T-cell (primary cell): ENCODE measurements at regions of chr2 and their contacts with region 1.

Region 1: GRCh38 chr2:135839713-135840112 is 2.7 kb upstream of the LCT start:
- DNase-seq: no peak
- ATAC-seq: no peak
- H3K4me3 ChIP-seq: no peak overlapping the region
- H3K4me3 Mint-ChIP-seq: no peak overlapping the region
- H3K27ac ChIP-seq: no peak overlapping the region
- H3K27ac Mint-ChIP-seq: no peak overlapping the region
- H3K4me1 ChIP-seq: peaks cover 2 to 3% of the 10 kb centered on the region in 2 experiments
- H3K4me1 Mint-ChIP-seq: peaks cover 13 to 25% (median 16%) of the 10 kb centered on the region in 3 donors
- H3K27me3 ChIP-seq: no peaks in the 10 kb centered on the region
- H3K27me3 Mint-ChIP-seq: no peaks in the 10 kb centered on the region

Region 2: DNA sequence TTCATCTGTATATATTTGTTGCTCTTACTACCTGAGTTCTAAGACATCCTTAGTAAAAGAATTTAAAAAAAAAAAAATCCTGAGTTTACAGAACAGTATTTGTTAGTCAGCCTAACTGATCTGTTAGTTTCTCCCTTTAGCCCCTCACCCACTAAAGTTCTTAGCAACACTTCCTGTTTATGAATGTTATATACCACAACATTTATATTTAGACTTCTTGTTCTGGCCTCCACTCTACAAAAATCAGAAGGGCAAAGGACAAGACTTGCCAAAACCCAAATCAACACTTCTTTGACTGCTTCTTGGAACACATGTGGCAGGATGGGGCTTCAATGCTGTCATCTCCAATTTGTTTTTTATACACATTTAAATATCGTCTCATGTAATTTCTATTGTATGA is 1514.8 kb before region 1 on chr2:
- CTCF ChIA-PET with region 1: interaction called in 1 of 2 experiments, 11 read pairs
- POLR2A ChIA-PET with region 1: no interaction called
- DNase-seq: peak in 1 of 35 experiments; percentile 40
- ATAC-seq: peak; percentile 7 to 51 (median 31)
- H3K4me3 ChIP-seq: no peak overlapping the region
- H3K4me3 Mint-ChIP-seq: no peak overlapping the region
- H3K27ac ChIP-seq: peak overlapping the region; percentile 15
- H3K27ac Mint-ChIP-seq: peak overlapping the region; percentile 30 to 74
- H3K4me1 ChIP-seq: peaks cover 18 to 58% of the 10 kb centered on the region in 2 experiments
- H3K4me1 Mint-ChIP-seq: peaks cover 62 to 89% (median 78%) of the 10 kb centered on the region in 3 donors
- H3K27me3 ChIP-seq: no peaks in the 10 kb centered on the region
- H3K27me3 Mint-ChIP-seq: no peaks in the 10 kb centered on the region